ENCODE measurements at regions of chr22 and their contacts with region 1.

Region 1: GRCh38 chr22:30104501-30105156 is 24.4 kb downstream of the HORMAD2 start:
- DNase-seq: no peak

Region 2: GRCh38 chr22:30005213-30005857 is 99.3 kb before region 1 on chr22:
- intact Hi-C with region 1: no loop called
- DNase-seq: peak in 41 of 42 donors; percentile 48 to 91 (median 77)

Region 3: GRCh38 chr22:30169002-30169401 is 64.4 kb after region 1 on chr22:
- intact Hi-C with region 1: no loop called
- DNase-seq: no peak

Region 4: GRCh38 chr22:30253205-30253852 is 148.7 kb after region 1 on chr22:
- intact Hi-C with region 1: loop called (anchors 5 kb)
- DNase-seq: peak; percentile 25 to 86 (median 73)

Measured in head of caudate nucleus (tissue), 42 donors.